ENCODE measurements at regions of chr14 and their contacts with region 1.

Region 1: DNA sequence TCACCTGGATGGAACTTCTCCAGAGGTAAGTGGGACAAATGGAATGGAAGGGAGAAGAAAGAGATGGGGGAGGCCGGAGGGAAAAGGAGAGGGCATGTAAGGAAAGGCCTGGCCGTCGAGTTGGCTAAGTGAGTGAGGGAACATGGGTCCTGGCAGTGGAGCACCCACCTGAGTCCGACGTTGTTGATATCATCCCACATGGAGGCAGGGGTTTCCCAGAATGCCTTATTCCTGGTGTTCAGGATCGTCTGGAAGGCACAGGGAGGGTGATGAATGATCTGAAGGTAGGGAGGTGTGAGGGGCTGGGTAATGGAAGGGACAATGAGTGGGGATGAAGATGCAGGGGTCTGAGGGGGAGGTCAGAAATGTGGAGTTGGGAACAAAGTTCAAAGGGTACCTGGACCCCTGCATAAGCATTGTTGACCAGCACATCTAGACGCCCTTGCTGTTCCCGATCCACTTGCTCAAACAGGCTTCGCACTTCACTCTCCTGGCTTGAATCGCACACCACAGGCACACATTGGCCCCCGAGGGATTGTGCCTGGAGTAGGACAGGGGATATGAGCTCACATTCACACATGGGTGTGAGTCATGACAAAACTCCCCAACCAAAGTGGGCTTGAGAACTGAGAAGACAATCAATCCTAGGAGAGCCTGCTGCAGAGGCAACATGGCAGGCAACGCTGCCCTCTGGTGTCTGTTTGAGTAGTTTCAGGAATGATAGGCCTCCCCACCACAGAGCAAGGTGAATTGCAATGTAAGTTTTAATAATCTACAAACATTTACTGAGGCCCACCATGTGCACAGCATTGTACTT is 3.0 kb downstream of the DHRS1 start:
- DNase-seq: no peak
- H3K4me3 ChIP-seq: no peak overlapping the region
- H3K27ac ChIP-seq: peak overlapping the region; percentile 6
- H3K4me1 ChIP-seq: peaks cover 46% of the 10 kb centered on the region
- H3K27me3 ChIP-seq: no peaks in the 10 kb centered on the region
- CTCF ChIP-seq: peak; percentile 28 to 73 (median 62)
- POLR2A ChIP-seq: no peak

Region 2: DNA sequence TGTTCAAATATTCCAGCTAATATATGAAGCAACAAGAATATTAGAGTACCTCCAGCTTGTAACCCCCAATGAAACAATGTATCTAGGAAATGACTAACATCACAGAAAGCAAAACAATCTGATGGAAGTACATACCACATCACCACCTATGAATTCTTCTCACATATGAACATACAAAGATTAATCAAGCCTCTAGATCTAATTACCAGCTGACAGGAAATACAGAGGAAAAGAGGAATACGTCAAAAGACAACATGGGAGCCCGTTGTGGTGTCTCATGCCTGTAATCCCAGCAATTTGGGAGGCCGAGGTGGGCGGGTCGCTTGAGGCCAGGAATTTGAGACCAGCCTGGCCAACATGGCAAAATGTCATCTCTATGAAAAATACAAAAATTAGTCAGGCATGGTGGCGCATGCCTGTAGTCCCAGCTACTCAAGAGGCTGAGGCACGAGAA is 71.9 kb before region 1 on chr14:
- intact Hi-C with region 1: no loop called
- DNase-seq: no peak
- H3K4me3 ChIP-seq: no peak overlapping the region
- H3K27ac ChIP-seq: no peak overlapping the region
- H3K4me1 ChIP-seq: no peaks in the 10 kb centered on the region
- H3K27me3 ChIP-seq: no peaks in the 10 kb centered on the region
- CTCF ChIP-seq: no peak
- POLR2A ChIP-seq: no peak

Region 3: GRCh38 chr14:24241829-24242443 is 54.6 kb before region 1 on chr14:
- intact Hi-C with region 1: loop called (anchors 2 kb)
- DNase-seq: peak in 1 of 2 donors; percentile 94
- H3K4me3 ChIP-seq: peak overlapping the region; percentile 65 to 75
- H3K27ac ChIP-seq: peak overlapping the region; percentile 98
- H3K4me1 ChIP-seq: peaks cover 47% of the 10 kb centered on the region
- H3K27me3 ChIP-seq: no peaks in the 10 kb centered on the region
- CTCF ChIP-seq: peak in 2 of 3 experiments; percentile 25 to 78
- POLR2A ChIP-seq: no peak

Measured in vagina (tissue), 2 donors.